Right cardiac atrium (tissue), 5 donors: ENCODE measurements at regions of chr17 and their contacts with region 1.

Region 1: DNA sequence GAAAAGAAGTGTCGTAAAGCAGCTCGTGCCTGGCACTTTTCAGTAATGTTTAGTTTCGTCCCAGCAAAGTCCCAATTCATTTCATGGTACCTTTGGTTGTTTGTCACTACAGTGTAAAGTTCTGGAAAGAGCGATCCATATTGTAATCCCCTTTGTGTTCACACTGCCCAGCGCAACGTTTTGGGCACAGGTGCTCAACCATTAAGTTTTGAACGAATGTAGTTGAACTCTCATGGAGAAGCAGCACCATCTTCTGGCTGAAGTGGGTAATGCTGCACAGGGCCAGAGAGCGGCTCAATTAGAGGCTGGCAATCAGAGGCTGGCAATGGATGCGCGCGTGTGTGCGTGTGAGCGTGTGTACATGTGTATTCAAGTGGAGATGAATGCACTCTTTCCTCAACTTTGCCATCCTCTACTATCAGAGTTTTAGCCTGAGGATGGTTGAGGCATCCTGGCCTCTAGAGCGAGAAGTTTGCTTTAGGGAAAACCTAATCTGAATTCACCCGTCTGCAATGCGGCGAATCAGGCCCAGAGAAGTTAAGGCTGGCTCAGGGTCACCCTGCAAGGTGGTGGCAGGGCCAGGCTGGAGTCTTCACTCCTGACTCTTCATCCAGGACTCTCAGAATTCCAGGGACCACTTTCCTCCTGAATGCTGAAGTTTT is 29.9 kb downstream of the DYNLL2 start:
- DNase-seq: peak; percentile 73 to 88 (median 86)
- ATAC-seq: peak; percentile 79 to 84
- H3K4me3 ChIP-seq: no peak overlapping the region
- H3K27ac ChIP-seq: no peak overlapping the region
- H3K4me1 ChIP-seq: no peaks in the 10 kb centered on the region
- H3K27me3 ChIP-seq: no peaks in the 10 kb centered on the region

Region 2: DNA sequence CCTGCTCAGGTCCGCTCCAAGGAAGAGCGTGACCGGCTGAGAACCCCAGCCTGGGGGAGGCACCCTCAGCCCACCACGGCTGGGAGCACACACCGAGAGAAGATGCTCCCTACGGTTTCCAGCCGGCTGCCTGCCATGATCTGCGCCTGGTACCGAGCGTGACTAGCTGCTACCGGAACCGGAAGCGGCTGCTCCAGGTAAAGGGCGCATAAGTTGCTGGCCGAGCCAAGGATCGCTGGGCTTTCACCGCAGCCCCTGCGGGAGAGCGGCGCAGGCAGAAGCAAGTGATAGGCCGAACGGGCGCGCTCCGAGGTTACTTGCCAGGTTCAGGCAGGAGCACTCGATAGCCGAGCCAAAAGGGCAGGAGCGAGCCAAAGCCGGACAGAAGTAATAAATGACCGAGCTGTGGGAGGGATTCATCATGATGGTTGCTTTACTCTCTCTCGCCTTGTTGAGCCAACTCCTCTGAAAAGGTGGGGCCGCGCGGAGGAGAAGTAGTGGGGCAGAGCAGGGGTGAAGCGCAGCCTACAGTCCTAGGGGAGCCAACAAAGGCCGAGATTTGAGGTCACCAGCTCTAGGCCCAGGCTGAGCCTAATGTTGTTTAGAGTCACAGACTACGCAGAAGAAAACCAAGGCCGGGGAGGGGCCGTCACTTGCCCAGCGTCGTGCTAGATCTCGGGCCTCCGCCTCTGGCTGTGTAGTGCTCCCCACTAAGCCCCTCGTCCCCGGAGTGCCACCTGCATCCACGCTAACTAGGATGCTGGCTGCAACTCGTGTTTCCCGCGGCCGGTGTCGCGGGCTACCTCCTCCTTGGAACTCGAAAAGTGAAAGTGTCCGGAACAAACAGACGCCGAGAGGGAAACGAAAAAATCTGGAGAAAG is 263.0 kb before region 1 on chr17 and contains the start of gene MRPS23:
- intact Hi-C with region 1: loop called in 2 of 4 experiments (anchors 5 to 10 kb)
- DNase-seq: peak; percentile 99
- ATAC-seq: peak; percentile 88 to 94
- H3K4me3 ChIP-seq: peak within 1 kb of the TSS; percentile 90
- H3K27ac ChIP-seq: peak within 1 kb of the TSS; percentile 99
- H3K4me1 ChIP-seq: peaks cover 6% of the 10 kb centered on the region
- H3K27me3 ChIP-seq: no peaks in the 10 kb centered on the region
- total RNA-seq, gene MRPS23: 50.9 to 68.3 (median 61.1) TPM

Region 3: GRCh38 chr17:57855391-57856035 is 257.6 kb before region 1 on chr17:
- intact Hi-C with region 1: loop called in 2 of 4 experiments (anchors 5 to 10 kb)
- DNase-seq: no peak
- ATAC-seq: no peak
- H3K4me3 ChIP-seq: no peak overlapping the region
- H3K27ac ChIP-seq: peak overlapping the region; percentile 22
- H3K4me1 ChIP-seq: peaks cover 3% of the 10 kb centered on the region
- H3K27me3 ChIP-seq: no peaks in the 10 kb centered on the region

Region 4: DNA sequence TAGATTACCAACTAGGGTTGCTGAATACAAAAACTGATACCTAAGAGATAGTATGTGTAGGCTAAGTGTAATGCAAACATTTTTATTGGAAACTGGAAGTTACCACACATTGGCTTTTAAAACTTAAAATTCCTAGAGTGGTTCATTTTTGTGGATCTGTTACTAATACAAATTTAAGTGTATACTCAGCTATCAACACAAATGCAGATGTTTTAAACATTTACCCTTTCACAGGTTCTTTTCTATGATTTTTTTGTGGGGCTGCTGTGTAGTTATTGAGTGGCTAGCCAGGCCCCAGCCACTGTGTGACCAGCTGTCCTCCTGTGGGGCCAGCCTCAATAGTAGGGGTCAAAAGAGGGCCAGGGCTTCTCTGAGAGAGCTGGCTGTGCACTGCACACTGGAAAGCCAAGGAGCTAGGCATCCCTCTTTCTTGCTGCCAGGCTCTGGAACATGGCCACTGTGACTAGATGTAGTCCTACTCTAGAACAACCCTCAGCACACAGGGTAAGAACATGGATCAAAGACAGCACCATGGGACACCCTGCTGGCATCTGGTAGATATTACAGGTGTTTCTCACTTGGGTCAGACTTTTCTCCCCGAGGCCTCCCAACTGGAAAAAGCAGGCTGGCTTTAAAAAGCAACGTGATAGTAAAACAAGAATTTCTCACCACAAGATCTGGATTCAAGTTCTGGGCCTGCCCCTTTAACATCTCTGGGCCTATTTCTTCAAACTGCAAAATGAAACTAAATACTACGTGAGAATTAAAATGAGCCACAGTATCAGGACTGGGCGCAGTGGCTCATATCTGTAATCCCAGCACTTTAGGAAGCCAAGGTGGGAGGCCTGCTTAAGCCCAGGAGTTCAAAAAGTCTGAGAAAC is 117.8 kb before region 1 on chr17:
- intact Hi-C with region 1: loop called in 1 of 4 experiments (anchors 5 kb)
- DNase-seq: peak; percentile 53 to 77 (median 63)
- ATAC-seq: peak; percentile 88 to 90
- H3K4me3 ChIP-seq: no peak overlapping the region
- H3K27ac ChIP-seq: no peak overlapping the region
- H3K4me1 ChIP-seq: peaks cover 6% of the 10 kb centered on the region
- H3K27me3 ChIP-seq: no peaks in the 10 kb centered on the region

Region 5: GRCh38 chr17:58020401-58020800 is 92.7 kb before region 1 on chr17:
- intact Hi-C with region 1: loop called in 2 of 4 experiments (anchors 5 to 10 kb)
- DNase-seq: no peak
- ATAC-seq: no peak
- H3K4me3 ChIP-seq: no peak overlapping the region
- H3K27ac ChIP-seq: no peak overlapping the region
- H3K4me1 ChIP-seq: no peaks in the 10 kb centered on the region
- H3K27me3 ChIP-seq: no peaks in the 10 kb centered on the region

Region 6: GRCh38 chr17:58172369-58173071 is 59.4 kb after region 1 on chr17:
- intact Hi-C with region 1: no loop called
- DNase-seq: no peak
- ATAC-seq: peak in 1 of 2 donors; percentile 41
- H3K4me3 ChIP-seq: no peak overlapping the region
- H3K27ac ChIP-seq: no peak overlapping the region
- H3K4me1 ChIP-seq: no peaks in the 10 kb centered on the region
- H3K27me3 ChIP-seq: no peaks in the 10 kb centered on the region

Region 7: DNA sequence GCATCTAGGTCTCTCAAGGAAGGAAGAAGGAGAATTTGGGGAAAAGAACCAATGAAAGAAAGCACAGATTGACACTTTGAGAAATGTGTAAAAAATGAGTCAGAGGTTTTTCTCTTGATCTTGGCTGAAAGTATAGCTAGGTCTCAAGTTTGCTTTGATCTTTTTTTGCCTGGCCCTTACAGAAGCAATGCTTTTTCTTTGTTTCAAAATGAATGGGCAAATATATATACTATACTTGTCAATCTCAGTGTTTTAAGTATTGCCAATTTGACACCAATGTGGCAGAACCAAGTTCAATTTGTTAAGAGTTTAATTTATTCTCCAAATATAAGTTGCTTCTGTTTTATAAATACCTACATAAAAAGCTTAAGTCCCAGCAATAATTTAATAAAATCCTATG is 762.2 kb after region 1 on chr17:
- intact Hi-C with region 1: no loop called
- DNase-seq: no peak
- ATAC-seq: no peak
- H3K4me3 ChIP-seq: no peak overlapping the region
- H3K27ac ChIP-seq: no peak overlapping the region
- H3K4me1 ChIP-seq: no peaks in the 10 kb centered on the region
- H3K27me3 ChIP-seq: no peaks in the 10 kb centered on the region